H1 (cell line): ENCODE measurements at regions of chr2 and their contacts with region 1.

Region 1: DNA sequence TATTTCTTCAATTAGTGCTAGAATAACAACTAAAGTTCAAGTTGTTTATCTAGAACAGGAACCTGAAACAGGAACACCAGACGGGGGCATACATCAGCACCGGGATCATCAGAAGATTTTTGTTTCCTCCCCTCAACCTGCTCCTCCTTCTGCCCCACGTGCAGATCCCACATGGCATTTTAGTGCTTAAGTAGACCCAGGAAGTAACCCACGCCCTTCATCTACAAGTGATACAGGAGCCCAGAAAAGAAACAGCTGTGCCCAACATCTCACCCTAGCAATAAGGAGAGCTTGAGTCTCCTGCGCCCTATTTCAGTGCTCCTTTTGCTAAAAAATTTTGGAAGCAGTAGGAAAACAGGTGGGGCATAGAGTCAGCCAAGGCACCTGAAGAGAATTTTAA is 5.2 kb downstream of the ZNF385B start:
- DNase-seq: no peak
- H3K4me3 ChIP-seq: no peak overlapping the region
- H3K27ac ChIP-seq: no peak overlapping the region
- H3K4me1 ChIP-seq: peaks cover 0 to 2% (median 0%) of the 10 kb centered on the region in 4 experiments; a peak in 1 of 7 replicates
- H3K27me3 ChIP-seq: peaks cover 0 to 17% (median 5%) of the 10 kb centered on the region in 4 experiments; a peak in 4 of 7 replicates
- CTCF ChIP-seq: no peak
- EP300 ChIP-seq: no peak
- POLR2A ChIP-seq: no peak
- RAD21 ChIP-seq: no peak

Region 2: DNA sequence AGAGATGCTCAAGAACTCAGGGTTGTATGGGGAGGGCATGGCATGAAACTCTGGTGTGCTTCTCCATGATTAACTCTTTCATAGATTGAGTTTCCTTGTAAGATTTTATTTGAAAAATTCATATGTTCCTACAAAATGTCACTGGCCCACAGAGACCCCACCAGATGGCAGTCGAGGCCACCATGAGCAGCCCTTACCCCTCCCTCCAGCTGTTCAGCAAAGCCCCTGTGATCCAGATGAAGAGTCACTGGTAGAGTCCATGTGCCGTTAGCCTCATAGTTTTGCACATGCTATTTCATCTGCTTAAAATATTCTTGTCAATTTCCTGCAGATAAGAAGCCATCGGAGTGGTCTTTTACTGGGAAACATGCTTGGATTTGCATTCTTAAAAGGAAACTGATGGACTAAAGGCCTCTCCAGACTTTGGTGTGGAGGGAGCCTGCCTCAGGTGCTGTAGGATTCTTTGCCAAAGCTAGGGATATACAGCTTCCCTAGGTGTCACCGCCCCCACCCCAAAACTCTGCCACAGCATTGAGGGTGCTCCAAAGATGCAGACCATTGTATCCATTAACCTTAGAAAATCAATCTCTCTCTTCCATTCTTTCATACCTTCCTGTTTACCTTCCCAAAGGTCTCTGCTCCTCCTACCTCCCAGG is 13.6 kb before region 1 on chr2:
- CTCF ChIA-PET with region 1: interaction called, 15 read pairs
- POLR2A ChIA-PET with region 1: no interaction called
- DNase-seq: peak in 1 of 2 experiments; percentile 53
- H3K4me3 ChIP-seq: no peak overlapping the region
- H3K27ac ChIP-seq: no peak overlapping the region
- H3K4me1 ChIP-seq: peaks cover 0 to 3% (median 1%) of the 10 kb centered on the region in 4 experiments; a peak in 3 of 7 replicates
- H3K27me3 ChIP-seq: no peaks in the 10 kb centered on the region
- CTCF ChIP-seq: peak; percentile 59 to 74 (median 62)
- EP300 ChIP-seq: no peak
- POLR2A ChIP-seq: no peak
- RAD21 ChIP-seq: peak; percentile 84 to 85